Endothelial cell of umbilical vein (primary cell): ENCODE measurements at regions of chr2 and their contacts with region 1.

Region 1: DNA sequence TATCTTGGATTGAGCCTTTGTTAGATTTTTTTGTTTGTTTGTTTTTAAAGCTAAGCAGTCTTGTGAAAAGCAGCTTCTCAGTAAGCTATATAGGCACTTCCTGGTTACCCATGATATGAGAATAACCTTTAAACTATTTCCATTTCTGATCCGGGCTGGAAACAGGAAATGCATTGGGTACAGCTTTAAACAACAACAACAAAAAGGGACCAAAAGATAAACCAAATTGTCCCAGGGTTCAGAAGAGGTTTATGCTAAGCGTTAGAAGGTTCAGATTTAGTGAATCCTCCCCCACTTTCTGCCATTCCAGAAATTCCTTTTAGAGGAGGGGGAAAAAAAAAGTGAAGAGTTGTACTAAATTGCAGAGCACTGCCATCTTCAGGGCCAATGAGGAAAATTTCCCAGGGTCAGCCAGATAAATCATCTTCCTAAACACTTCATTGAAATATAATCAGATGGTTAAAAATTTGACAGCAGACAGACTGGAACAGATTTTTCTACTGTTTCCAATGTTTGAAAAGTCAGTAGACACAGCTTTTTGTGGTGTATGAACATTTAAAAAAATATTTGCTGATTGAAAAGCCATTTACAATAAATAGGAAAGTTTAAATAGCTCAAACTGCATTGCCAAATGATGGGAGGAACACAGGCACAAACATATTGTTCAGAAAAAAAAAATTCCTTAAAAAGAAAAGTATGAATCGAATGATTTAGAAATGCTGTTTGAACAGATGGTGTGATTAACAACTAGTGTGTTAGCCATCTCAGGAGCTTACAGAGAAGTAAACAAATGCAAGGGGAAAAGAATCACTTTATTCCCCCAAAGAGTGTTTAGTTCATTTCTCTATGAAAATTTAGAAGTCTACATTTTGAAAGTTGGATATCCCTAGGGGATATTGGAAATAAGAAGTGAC is 189.9 kb upstream of the TANK start:
- DNase-seq: peak; percentile 90
- H3K4me3 ChIP-seq: peak overlapping the region in 1 of 3 experiments; percentile 53
- H3K27ac ChIP-seq: peak overlapping the region; percentile 71
- H3K4me1 ChIP-seq: no peaks in the 10 kb centered on the region
- H3K27me3 ChIP-seq: no peaks in the 10 kb centered on the region
- CTCF ChIP-seq: peak; percentile 51 to 53
- POLR2A ChIP-seq: no peak

Region 2: DNA sequence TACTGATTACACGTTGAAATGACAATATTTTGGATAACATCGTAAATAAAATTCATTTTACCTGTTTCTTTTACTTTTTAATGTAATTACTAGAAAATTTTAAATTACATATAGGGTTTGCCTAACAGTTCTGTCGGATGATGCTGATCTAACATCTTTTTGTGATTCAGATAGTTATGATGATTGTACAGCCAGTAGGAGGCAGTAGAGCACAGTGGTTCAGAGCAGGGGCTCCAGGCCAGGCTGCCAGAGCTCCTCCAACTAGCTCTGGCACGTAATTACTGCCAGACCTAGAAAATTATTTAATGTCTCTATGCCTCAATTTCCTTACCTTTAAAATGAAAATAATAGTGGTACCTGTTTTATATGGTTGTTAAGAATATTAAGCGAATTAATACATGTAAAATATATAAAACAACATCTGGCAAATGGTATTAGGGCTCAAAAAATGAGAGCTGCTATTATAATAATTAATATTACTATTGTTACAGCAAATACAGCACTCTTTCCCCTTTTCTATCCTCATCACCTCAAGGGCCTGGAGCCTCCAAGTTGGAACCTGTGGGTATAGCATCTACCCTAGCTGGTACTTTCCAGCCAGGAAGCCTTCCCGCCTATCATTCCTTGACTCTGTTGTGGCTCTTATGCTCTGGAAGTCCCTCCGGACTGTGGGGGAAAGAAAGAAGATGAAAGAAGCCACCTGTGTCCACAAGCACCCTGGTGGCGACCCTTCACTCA is 860.2 kb before region 1 on chr2:
- CTCF ChIA-PET with region 1: interaction called, 37 read pairs
- POLR2A ChIA-PET with region 1: no interaction called
- dilution Hi-C with region 1: no loop called
- intact Hi-C with region 1: loop called (anchors 1 kb)
- DNase-seq: peak; percentile 83
- H3K4me3 ChIP-seq: no peak overlapping the region
- H3K27ac ChIP-seq: no peak overlapping the region
- H3K4me1 ChIP-seq: no peaks in the 10 kb centered on the region
- H3K27me3 ChIP-seq: no peaks in the 10 kb centered on the region
- CTCF ChIP-seq: peak; percentile 66 to 72
- POLR2A ChIP-seq: no peak

Region 3: GRCh38 chr2:160278879-160279177 is 691.5 kb before region 1 on chr2:
- CTCF ChIA-PET with region 1: interaction called, 22 read pairs
- POLR2A ChIA-PET with region 1: no interaction called
- dilution Hi-C with region 1: no loop called
- intact Hi-C with region 1: loop called (anchors 1 kb)
- DNase-seq: peak; percentile 58
- H3K4me3 ChIP-seq: no peak overlapping the region
- H3K27ac ChIP-seq: peak overlapping the region; percentile 80
- H3K4me1 ChIP-seq: peaks cover 44% of the 10 kb centered on the region
- H3K27me3 ChIP-seq: no peaks in the 10 kb centered on the region
- CTCF ChIP-seq: peak; percentile 29 to 50
- POLR2A ChIP-seq: peak; percentile 0

Region 4: DNA sequence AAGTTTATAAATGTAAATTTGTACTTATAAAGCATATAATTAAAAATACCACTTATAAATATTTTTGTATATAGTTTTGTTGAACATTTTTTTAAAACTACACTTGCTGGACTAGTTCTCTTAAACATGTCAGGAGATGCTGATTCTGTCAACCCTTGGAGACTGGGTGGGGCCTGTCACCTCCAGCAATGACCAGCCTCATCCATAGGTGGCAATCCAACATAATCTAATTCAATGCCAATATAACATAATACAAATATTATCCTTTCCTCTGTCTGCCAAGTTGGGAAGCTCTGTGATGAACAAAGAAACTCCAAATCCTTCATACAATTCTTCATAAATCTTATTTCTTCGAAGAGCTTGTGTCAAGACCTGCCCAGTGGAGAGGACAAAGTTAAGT is 617.1 kb before region 1 on chr2:
- CTCF ChIA-PET with region 1: interaction called, 28 read pairs
- POLR2A ChIA-PET with region 1: no interaction called
- dilution Hi-C with region 1: no loop called
- intact Hi-C with region 1: no loop called
- DNase-seq: peak; percentile 38
- H3K4me3 ChIP-seq: no peak overlapping the region
- H3K27ac ChIP-seq: no peak overlapping the region
- H3K4me1 ChIP-seq: peaks cover 3% of the 10 kb centered on the region
- H3K27me3 ChIP-seq: no peaks in the 10 kb centered on the region
- CTCF ChIP-seq: peak; percentile 28 to 31
- POLR2A ChIP-seq: no peak

Region 5: GRCh38 chr2:160493227-160494028 is 476.9 kb before region 1 on chr2 and contains the start of gene RBMS1:
- CTCF ChIA-PET with region 1: interaction called, 6 read pairs
- POLR2A ChIA-PET with region 1: no interaction called
- dilution Hi-C with region 1: no loop called
- intact Hi-C with region 1: loop called (anchors 1 kb)
- DNase-seq: no peak
- H3K4me3 ChIP-seq: peak within 1 kb of the TSS; percentile 98 to 100 (median 99)
- H3K27ac ChIP-seq: peak within 1 kb of the TSS; percentile 89
- H3K4me1 ChIP-seq: peaks cover 25% of the 10 kb centered on the region
- H3K27me3 ChIP-seq: no peaks in the 10 kb centered on the region
- CTCF ChIP-seq: no peak
- POLR2A ChIP-seq: no peak
- total RNA-seq, gene RBMS1: 93.3 and 94.8 TPM in 2 replicates

Region 6: GRCh38 chr2:160956243-160956802 is 14.0 kb before region 1 on chr2:
- CTCF ChIA-PET with region 1: interaction called, 10 read pairs
- POLR2A ChIA-PET with region 1: no interaction called
- dilution Hi-C with region 1: no loop called
- intact Hi-C with region 1: no loop called
- DNase-seq: no peak
- H3K4me3 ChIP-seq: no peak overlapping the region
- H3K27ac ChIP-seq: no peak overlapping the region
- H3K4me1 ChIP-seq: peaks cover 4% of the 10 kb centered on the region
- H3K27me3 ChIP-seq: no peaks in the 10 kb centered on the region
- CTCF ChIP-seq: no peak
- POLR2A ChIP-seq: no peak